Mammary epithelial cell (primary cell): ENCODE measurements at regions of chr14 and their contacts with region 1.

Region 1: DNA sequence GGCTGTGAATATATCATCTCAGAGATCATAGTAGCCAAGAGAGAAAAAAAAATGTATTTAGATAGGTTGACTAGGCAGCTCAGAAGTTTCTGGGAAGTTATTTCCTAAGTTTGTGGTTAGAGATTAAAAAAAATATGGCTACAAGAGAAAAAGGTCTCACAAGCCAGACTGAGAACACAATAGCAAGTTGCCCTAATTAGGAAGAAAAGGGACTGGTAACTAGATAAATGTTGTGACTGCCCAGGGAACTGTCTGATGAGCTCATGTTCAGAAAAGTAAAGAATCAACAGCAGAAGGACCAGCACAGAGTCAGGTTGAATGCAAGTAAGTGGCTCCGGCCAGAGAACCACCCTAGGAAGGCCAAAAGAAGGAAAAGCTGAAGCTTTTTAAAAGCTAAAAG is 256.6 kb downstream of the PRKD1 start:
- DNase-seq: no peak
- H3K4me3 ChIP-seq: no peak overlapping the region
- H3K27ac ChIP-seq: no peak overlapping the region
- H3K4me1 ChIP-seq: no peaks in the 10 kb centered on the region
- H3K27me3 ChIP-seq: no peaks in the 10 kb centered on the region
- CTCF ChIP-seq: no peak

Region 2: DNA sequence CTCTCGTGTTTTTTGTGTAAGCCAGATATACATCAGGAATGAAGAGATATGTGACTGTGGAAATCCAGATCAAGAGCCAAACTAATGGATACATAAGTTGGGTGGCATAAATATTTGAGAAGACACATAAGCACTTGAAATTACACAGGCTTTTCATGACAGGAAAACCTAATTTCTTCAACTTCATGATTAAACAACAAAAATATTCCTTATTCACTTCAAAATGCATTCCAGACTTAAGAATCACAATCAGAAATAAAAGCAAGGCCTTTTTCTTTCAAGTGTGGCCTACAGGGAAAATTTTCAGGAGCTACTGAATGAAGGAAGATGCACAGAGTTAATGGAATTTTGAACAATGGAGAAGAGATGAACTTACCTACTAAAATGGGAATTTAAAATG is 388.9 kb before region 1 on chr14:
- CTCF ChIA-PET with region 1: no interaction called
- dilution Hi-C with region 1: no loop called
- in situ Hi-C with region 1: no loop called
- intact Hi-C with region 1: no loop called
- DNase-seq: no peak
- H3K4me3 ChIP-seq: no peak overlapping the region
- H3K27ac ChIP-seq: no peak overlapping the region
- H3K4me1 ChIP-seq: no peaks in the 10 kb centered on the region
- H3K27me3 ChIP-seq: no peaks in the 10 kb centered on the region
- CTCF ChIP-seq: no peak

Region 3: GRCh38 chr14:29627137-29627536 is 43.9 kb before region 1 on chr14:
- CTCF ChIA-PET with region 1: no interaction called
- dilution Hi-C with region 1: no loop called
- in situ Hi-C with region 1: no loop called
- intact Hi-C with region 1: no loop called
- DNase-seq: peak; percentile 5
- H3K4me3 ChIP-seq: no peak overlapping the region
- H3K27ac ChIP-seq: no peak overlapping the region
- H3K4me1 ChIP-seq: no peaks in the 10 kb centered on the region
- H3K27me3 ChIP-seq: no peaks in the 10 kb centered on the region
- CTCF ChIP-seq: no peak

Region 4: GRCh38 chr14:29637411-29637810 is 33.6 kb before region 1 on chr14:
- CTCF ChIA-PET with region 1: no interaction called
- dilution Hi-C with region 1: loop called (anchors 5 kb)
- in situ Hi-C with region 1: no loop called
- intact Hi-C with region 1: no loop called
- DNase-seq: no peak
- H3K4me3 ChIP-seq: no peak overlapping the region
- H3K27ac ChIP-seq: no peak overlapping the region
- H3K4me1 ChIP-seq: no peaks in the 10 kb centered on the region
- H3K27me3 ChIP-seq: no peaks in the 10 kb centered on the region
- CTCF ChIP-seq: no peak

Region 5: GRCh38 chr14:29955087-29955486 is 284.1 kb after region 1 on chr14:
- CTCF ChIA-PET with region 1: no interaction called
- dilution Hi-C with region 1: no loop called
- in situ Hi-C with region 1: no loop called
- intact Hi-C with region 1: no loop called
- DNase-seq: no peak
- H3K4me3 ChIP-seq: no peak overlapping the region
- H3K27ac ChIP-seq: no peak overlapping the region
- H3K4me1 ChIP-seq: no peaks in the 10 kb centered on the region
- H3K27me3 ChIP-seq: no peaks in the 10 kb centered on the region
- CTCF ChIP-seq: no peak